ENCODE measurements at regions of chr1 and their contacts with region 1.

Region 1: GRCh38 chr1:100132566-100133477 is at the starts of genes SASS6 and TRMT13:
- DNase-seq: peak; percentile 99
- total RNA-seq, gene SASS6: 1.2 TPM
- total RNA-seq, gene TRMT13: 8.1 TPM

Region 2: DNA sequence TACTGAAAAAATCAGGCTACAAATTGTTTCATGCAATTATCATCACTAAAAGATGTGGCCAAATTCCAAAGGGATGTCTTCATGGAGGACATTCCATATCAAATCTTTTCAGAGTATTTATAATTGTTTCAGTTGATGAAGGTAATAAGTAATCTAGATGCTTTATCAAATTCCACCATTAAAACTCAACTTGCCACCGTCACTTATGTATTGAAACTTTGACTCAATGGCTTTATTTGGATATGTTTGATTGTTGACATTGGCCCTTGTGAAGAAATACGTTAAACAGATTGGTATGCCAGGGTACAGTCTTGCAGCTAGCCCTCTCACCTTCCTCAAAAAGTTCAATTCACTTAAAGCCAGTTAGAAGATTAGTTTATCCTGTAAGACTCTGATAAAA is 519.1 kb before region 1 on chr1:
- intact Hi-C with region 1: no loop called
- DNase-seq: no peak

Region 3: GRCh38 chr1:100037927-100038659 is 94.7 kb before region 1 on chr1:
- intact Hi-C with region 1: loop called (anchors 2 kb)
- DNase-seq: peak; percentile 96

Region 4: DNA sequence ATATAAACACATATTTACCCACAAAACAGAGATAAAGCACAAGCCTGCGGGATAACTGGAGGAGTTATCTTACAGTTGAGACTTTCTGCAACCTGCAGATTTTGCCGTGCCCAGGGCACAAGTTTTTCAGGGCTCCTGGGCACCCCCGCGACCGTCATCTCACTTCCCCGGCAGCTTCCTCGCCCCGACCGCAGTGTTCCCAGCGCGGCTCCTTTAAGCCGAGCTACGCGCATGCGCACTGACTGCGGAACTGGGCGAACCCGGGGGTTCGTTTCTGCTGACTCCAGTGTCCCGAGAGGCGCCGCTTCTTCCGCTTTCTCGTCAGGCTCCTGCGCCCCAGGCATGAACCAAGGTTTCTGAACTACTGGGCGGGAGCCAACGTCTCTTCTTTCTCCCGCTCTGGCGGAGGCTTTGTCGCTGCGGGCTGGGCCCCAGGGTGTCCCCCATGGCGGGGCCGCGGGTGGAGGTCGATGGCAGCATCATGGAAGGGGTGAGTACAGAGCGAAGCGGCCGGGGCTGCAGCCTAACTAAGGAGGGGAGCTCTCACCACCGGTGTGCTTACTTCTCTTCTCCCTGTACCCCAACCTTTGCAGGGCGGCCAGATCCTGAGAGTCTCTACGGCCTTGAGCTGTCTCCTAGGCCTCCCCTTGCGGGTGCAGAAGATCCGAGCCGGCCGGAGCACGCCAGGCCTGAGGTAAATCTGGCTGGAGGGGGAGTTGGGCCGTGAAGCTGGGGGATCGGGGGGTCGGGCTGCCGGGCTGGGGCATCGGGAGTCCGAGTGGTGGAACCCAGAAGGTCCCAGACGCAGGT is 133.3 kb after region 1 on chr1 and contains the start of gene RTCA:
- intact Hi-C with region 1: loop called (anchors 5 kb)
- DNase-seq: peak; percentile 99
- total RNA-seq, gene RTCA: 34.4 TPM

Region 5: GRCh38 chr1:100459358-100460114 is 326.7 kb after region 1 on chr1:
- intact Hi-C with region 1: loop called (anchors 10 kb)
- DNase-seq: no peak

Measured in cardiac septum (tissue), 1 donor.